ENCODE measurements at regions of chr17 and their contacts with region 1.

Region 1: GRCh38 chr17:79844869-79845600 is 5.8 kb upstream of the CBX4 start:
- DNase-seq: peak; percentile 61
- ATAC-seq: peak; percentile 66
- H3K4me3 Mint-ChIP-seq: no peak overlapping the region
- H3K27ac Mint-ChIP-seq: no peak overlapping the region
- H3K4me1 Mint-ChIP-seq: peaks cover 9% of the 10 kb centered on the region
- H3K27me3 Mint-ChIP-seq: peaks cover 68% of the 10 kb centered on the region

Region 2: DNA sequence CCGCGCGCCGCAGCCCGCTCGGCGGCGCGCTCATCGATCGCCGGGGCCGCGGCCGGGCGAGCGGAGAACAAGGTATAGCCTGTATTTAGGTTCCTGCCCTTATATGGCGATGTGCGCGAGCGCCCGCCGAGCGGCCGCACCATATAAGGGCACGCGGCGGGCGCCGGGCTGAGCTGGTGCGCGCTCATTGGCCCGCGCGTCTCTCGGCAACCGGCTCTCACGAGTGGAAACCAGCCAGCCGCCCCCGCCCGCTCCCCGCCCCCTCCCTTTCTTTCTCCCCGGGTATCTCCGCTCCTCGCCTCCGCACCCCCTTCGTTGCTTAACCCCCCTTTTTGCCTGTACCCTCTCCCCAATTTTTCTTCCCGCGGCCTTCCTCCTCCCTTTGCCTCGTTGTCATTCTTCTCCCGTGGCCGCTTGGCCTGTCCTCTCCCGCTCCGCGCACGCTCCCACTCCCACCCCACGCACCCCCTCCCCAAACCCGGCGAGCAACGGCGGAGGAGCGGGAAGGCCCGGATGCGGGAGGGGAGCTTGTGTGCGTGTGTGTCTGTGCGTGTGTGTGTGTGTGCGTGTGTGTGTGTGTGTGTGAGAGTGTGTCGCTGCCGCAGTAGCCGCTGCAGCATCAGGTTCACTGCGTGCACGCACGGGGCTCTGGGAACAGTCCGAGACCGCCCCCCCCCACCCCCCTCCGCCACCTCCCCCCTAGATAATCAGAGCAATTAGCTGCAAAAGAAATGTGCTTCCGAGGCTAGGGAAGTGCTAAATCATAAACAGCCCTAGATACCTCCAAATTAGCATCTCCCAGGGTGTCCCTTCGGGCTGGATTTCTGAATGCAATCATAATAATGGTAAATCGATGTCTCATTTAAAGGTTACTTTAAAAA is 34.7 kb before region 1 on chr17:
- CTCF ChIA-PET with region 1: interaction called, 44 read pairs
- DNase-seq: peak; percentile 81
- ATAC-seq: peak; percentile 95
- H3K4me3 Mint-ChIP-seq: no peak overlapping the region
- H3K27ac Mint-ChIP-seq: no peak overlapping the region
- H3K4me1 Mint-ChIP-seq: peaks cover 29% of the 10 kb centered on the region
- H3K27me3 Mint-ChIP-seq: peaks cover 67% of the 10 kb centered on the region

Region 3: GRCh38 chr17:79818026-79818758 is 26.8 kb before region 1 on chr17:
- CTCF ChIA-PET with region 1: interaction called, 44 read pairs
- DNase-seq: no peak
- ATAC-seq: no peak
- H3K4me3 Mint-ChIP-seq: no peak overlapping the region
- H3K27ac Mint-ChIP-seq: no peak overlapping the region
- H3K4me1 Mint-ChIP-seq: peaks cover 3% of the 10 kb centered on the region
- H3K27me3 Mint-ChIP-seq: peaks cover 66% of the 10 kb centered on the region

Region 4: GRCh38 chr17:79902146-79902791 is 57.2 kb after region 1 on chr17:
- CTCF ChIA-PET with region 1: no interaction called
- DNase-seq: no peak
- ATAC-seq: no peak
- H3K4me3 Mint-ChIP-seq: no peak overlapping the region
- H3K27ac Mint-ChIP-seq: no peak overlapping the region
- H3K4me1 Mint-ChIP-seq: no peaks in the 10 kb centered on the region
- H3K27me3 Mint-ChIP-seq: peaks cover 28% of the 10 kb centered on the region

Region 5: GRCh38 chr17:80195731-80196529 is 350.9 kb after region 1 on chr17:
- CTCF ChIA-PET with region 1: no interaction called
- DNase-seq: peak; percentile 60
- ATAC-seq: peak; percentile 64
- H3K4me3 Mint-ChIP-seq: no peak overlapping the region
- H3K27ac Mint-ChIP-seq: no peak overlapping the region
- H3K4me1 Mint-ChIP-seq: no peaks in the 10 kb centered on the region
- H3K27me3 Mint-ChIP-seq: peaks cover 20% of the 10 kb centered on the region

Measured in activated CD8-positive, alpha-beta memory T cell treated with anti-CD3 and anti-CD28 coated beads, Interleukin-2, amount 10 ng/mL, durations not matched to agents 7 days and 5 days (primary cell).